Activated naive CD8-positive, alpha-beta T cell treated with anti-CD3 and anti-CD28 coated beads, Interleukin-2, amount 10 ng/mL, durations not matched to agents 7 days and 5 days (primary cell): ENCODE measurements at regions of chr6 and their contacts with region 1.

Region 1: DNA sequence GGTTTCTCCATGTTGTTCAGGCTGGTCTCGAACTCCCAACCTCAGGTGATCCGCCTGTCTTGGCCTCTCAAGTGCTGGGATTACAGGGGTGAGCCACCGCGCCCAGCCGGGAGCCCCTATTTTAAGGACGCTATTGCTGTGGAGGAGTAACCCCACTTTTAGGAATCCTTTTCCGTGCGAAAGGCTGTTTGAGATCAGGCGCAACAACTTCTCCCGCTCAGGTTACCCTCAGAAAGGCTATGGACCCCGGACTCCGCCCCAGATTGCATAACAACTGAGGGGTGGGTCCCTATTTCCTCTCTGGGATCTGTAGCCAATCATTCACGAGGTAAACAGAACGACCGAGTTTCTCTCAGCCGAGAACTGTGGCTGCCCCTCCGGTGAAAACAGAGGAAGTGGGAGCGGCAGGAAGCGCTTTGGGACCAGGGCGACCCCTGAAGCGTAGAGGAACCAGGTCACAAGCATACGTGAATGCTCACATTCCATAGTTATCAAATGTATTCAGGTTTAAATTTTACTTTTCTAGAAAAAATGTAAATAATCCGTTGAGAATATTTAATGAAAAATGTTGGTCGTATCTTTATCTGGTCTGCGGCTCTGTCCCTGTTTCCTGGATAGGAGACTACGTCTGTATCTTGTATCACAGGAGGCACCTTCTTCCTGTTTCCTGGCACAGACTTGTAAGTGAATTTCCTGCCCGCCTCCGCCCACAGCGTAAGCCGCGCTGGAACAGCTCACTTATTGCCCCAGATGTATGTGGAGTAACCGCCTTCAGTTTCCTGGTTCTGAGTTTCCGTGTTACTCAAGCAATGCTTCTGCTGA is 26.8 kb downstream of the HLA-E start:
- DNase-seq: peak; percentile 82
- ATAC-seq: peak; percentile 92
- H3K4me3 Mint-ChIP-seq: peak overlapping the region; percentile 89
- H3K27ac Mint-ChIP-seq: peak overlapping the region; percentile 95
- H3K4me1 Mint-ChIP-seq: peaks cover 34% of the 10 kb centered on the region
- H3K27me3 Mint-ChIP-seq: no peaks in the 10 kb centered on the region

Region 2: GRCh38 chr6:30500421-30501355 is 15.5 kb before region 1 on chr6:
- POLR2A ChIA-PET with region 1: interaction called, 286 read pairs
- DNase-seq: no peak
- ATAC-seq: peak; percentile 59
- H3K4me3 Mint-ChIP-seq: peak overlapping the region; percentile 79
- H3K27ac Mint-ChIP-seq: peak overlapping the region; percentile 82
- H3K4me1 Mint-ChIP-seq: peaks cover 26% of the 10 kb centered on the region
- H3K27me3 Mint-ChIP-seq: no peaks in the 10 kb centered on the region

Region 3: DNA sequence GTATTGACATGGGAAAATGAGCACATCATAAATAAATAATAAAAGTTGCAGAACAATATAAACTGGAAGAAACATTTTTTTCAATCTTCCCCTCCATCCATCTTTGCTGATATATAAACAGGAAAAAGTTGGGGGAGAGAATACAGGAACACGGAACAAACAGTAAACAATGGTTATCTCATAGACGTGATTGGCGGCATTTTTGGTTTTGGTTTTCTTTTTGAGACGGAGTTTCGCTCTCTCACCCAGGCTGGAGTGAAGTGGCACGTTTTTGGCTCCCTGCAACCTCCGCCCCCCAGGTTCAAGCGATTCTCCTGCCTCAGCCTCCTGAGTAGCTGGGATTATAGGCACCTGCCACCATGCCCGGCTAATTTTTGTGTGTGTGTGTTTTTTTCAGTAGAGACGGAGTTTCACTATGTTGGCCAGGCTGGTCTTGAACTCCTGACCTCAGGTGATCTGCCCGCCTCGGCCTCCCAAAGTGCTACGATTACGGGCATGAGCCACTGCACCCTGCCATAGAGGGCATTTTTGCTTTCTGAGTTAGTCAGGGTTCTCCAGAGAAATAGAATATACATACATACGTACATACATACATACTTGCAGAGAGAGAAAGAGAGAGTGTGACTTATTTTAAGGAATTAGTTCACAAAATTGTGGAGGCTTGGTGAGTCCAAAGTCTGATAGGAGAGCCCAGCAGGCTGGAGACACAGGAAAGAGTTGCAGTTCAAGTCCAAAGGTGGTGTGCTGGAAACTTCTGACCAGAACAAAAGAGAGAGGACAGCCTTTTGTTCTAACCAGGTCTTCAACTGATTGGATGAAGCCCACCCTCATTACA is 17.5 kb after region 1 on chr6:
- POLR2A ChIA-PET with region 1: interaction called, 11 read pairs
- DNase-seq: no peak
- ATAC-seq: no peak
- H3K4me3 Mint-ChIP-seq: no peak overlapping the region
- H3K27ac Mint-ChIP-seq: no peak overlapping the region
- H3K4me1 Mint-ChIP-seq: peaks cover 11% of the 10 kb centered on the region
- H3K27me3 Mint-ChIP-seq: no peaks in the 10 kb centered on the region